Activated naive CD4-positive, alpha-beta T cell treated with anti-CD3 and anti-CD28 coated beads for 36 hours (primary cell): ENCODE measurements at regions of chr14 and their contacts with region 1.

Region 1: GRCh38 chr14:77053046-77053841 is 24.7 kb upstream of the IRF2BPL start:
- DNase-seq: peak; percentile 86
- H3K4me3 Mint-ChIP-seq: no peak overlapping the region
- H3K27ac Mint-ChIP-seq: no peak overlapping the region
- H3K4me1 Mint-ChIP-seq: peaks cover 21% of the 10 kb centered on the region
- H3K27me3 Mint-ChIP-seq: no peaks in the 10 kb centered on the region

Region 2: DNA sequence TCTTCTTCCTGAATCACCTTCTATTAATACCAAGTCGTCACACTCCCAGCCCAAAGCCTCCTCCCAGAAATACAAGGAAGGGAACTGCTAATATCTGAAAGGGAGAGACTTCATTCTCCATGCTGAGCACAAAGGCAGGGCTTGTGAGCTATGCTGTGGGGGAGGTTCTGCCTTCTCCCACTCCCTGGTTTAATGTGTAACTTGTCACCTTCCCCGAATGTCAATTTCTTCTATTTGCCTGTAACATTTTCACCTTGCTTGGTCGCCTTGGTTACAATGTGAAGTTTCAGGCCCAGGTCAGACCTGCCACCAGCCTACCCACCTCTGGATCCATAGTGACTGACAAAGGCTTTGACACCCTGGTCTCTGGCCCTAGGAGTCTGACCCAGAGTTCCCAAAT is 759.3 kb before region 1 on chr14:
- CTCF ChIA-PET with region 1: no interaction called
- intact Hi-C with region 1: no loop called
- DNase-seq: no peak
- H3K4me3 Mint-ChIP-seq: no peak overlapping the region
- H3K27ac Mint-ChIP-seq: no peak overlapping the region
- H3K4me1 Mint-ChIP-seq: no peaks in the 10 kb centered on the region
- H3K27me3 Mint-ChIP-seq: peaks cover 15% of the 10 kb centered on the region

Region 3: DNA sequence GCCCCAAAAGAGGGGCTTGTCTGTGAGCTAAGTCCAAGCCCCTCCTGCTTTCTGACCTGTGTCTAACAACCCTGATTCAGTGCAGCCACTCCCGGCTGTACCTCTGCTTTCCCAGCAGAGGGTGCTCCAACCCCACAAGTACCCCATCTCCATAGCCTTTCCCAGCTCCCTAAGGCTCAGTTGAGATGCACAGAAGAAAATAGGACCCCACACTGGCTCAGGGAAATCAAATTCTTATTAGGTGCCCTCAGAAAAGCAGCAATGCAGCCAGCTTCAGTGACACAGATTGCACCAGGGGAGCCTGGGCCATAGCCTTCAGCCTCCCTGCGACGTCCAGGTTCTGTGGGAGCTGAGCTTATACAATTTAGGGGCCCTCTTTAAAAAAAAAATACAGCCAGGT is 177.2 kb before region 1 on chr14:
- CTCF ChIA-PET with region 1: interaction called, 692 read pairs
- intact Hi-C with region 1: loop called (anchors 1 kb)
- DNase-seq: peak; percentile 55
- H3K4me3 Mint-ChIP-seq: no peak overlapping the region
- H3K27ac Mint-ChIP-seq: no peak overlapping the region
- H3K4me1 Mint-ChIP-seq: no peaks in the 10 kb centered on the region
- H3K27me3 Mint-ChIP-seq: no peaks in the 10 kb centered on the region

Region 4: GRCh38 chr14:76929927-76930326 is 123.3 kb before region 1 on chr14:
- CTCF ChIA-PET with region 1: interaction called, 16 read pairs
- intact Hi-C with region 1: no loop called
- DNase-seq: peak; percentile 85
- H3K4me3 Mint-ChIP-seq: peak overlapping the region; percentile 58
- H3K27ac Mint-ChIP-seq: peak overlapping the region; percentile 72
- H3K4me1 Mint-ChIP-seq: peaks cover 70% of the 10 kb centered on the region
- H3K27me3 Mint-ChIP-seq: no peaks in the 10 kb centered on the region

Region 5: DNA sequence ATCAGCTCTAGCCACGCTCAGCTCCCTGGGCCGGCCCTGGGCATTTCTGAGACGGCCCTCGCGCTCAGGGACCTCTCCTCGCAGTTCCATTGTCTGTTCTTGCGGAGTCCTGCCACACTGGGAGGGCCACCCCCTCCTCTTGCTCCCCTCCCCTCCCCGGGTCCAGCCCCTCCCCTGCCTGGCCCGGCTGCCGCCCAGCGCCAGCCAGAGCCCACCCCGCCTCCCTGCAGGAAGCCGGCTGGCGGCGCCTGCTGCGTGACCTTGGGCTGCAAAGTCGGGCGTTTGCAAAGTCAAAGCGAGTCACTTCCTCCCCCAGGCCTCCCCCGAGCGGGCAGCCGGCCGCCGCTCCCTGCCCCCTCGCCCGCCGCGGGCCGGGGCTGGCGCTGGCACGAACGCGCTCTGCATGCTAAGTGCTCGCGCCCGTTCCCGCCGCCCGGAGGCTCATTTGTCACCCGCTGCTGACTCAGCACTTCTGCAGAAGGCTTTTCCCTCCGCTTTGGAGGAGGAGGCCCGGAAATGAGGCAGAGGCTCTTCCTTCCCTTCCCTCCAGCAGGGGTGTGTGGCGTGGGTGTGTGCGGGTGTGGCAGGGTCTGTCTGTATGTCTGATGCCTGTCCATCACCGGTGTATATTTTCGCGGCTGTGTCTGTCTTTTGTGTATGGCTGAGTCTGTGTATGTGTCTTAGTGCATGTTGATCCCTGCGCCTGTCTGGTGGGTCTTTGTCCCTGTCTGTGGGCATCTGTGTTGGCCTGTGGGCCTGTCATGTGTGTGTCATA is 96.7 kb before region 1 on chr14:
- CTCF ChIA-PET with region 1: interaction called, 28 read pairs
- intact Hi-C with region 1: no loop called
- DNase-seq: peak; percentile 98
- H3K4me3 Mint-ChIP-seq: peak overlapping the region; percentile 80
- H3K27ac Mint-ChIP-seq: peak overlapping the region; percentile 97
- H3K4me1 Mint-ChIP-seq: peaks cover 72% of the 10 kb centered on the region
- H3K27me3 Mint-ChIP-seq: no peaks in the 10 kb centered on the region

Region 6: DNA sequence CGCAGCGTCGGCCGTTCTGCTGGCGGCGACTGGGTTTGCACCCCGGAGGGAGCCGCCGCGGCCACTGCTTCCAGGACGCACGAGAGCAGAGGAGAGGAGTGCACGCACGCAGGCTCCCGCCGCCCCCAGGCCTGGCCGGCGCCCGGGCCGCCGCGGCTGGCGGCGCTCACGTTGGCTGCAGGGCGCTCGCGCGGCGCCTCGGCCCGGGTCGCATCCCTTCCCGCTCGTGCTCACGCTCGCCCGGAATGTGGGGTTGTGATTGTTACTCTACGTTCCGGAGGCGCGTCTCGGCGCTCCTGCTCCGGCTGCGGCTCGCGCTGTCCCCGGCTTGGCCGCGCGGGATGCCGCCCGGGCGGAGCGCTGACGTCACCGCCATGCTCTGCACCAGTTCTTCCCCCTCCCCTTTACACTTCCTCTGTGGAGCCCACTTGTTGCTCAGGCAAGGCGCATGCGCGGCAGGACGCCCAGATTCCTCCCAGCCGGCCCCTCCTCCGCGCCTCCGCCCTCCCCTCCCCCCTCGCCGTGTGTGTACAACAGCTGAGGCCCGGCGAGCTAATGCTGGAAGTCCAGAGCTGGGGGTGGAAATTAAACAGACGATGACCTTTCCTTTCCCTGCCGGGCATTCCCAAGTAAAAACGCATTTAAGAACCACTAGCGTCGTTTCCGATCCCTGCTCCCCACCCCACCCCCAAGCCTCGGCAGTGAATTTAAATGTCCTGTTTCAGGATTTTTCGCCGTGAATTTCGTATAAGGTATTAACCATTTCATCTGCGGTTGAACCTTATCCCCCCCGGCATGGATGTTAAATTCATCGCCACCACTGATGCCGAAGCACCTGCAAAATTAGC is 24.6 kb before region 1 on chr14 and contains the start of gene IRF2BPL:
- CTCF ChIA-PET with region 1: interaction called, 20 read pairs
- intact Hi-C with region 1: loop called (anchors 1 kb)
- DNase-seq: peak; percentile 96
- H3K4me3 Mint-ChIP-seq: peak within 1 kb of the TSS; percentile 82
- H3K27ac Mint-ChIP-seq: peak within 1 kb of the TSS; percentile 94
- H3K4me1 Mint-ChIP-seq: peaks cover 57% of the 10 kb centered on the region
- H3K27me3 Mint-ChIP-seq: no peaks in the 10 kb centered on the region
- total RNA-seq, gene IRF2BPL: 34.8 to 35.2 TPM

Region 7: DNA sequence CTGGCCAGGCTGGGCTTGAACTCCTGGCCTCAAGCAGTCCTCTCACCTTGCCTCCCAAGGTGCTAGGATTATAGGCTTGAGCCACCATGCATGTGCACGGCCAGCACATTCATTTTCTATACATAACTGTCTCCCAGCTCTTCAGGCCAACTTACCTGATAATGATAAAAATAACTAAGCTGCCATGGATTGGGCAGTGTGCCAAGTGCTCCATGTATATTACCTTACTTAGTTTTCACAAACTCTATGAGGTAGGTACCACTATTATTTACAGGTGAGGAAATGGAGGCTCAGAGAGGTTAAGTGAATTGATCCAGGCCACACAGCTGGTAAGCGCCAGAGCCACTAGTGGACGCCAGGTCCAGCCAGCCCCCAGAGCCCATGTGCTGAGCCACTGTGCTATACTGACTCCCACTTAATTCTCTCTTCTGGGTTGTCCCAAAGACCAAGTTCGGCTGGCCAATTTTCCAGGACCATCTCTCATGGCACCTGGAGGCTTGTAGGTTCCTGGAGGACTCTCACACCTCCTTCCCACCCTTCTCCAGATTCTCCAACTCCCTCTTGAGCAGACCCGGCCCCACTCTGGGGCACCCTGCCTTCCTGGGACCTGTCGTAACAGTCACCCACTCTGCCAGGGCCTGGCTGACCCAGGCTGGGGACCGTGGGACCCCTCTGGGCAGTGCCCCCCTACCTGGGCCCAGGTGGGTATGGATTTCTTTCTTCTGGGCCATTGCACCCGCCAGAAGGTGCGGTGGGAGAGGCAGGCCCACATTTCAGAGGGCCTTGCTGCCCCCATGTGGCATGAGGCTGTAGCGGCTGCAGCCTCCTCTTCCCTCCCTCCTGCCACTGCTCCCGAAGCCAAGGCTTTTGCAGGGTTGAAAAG is 14.6 kb after region 1 on chr14:
- CTCF ChIA-PET with region 1: interaction called, 100 read pairs
- intact Hi-C with region 1: loop called (anchors 1 kb)
- DNase-seq: peak; percentile 71
- H3K4me3 Mint-ChIP-seq: no peak overlapping the region
- H3K27ac Mint-ChIP-seq: no peak overlapping the region
- H3K4me1 Mint-ChIP-seq: no peaks in the 10 kb centered on the region
- H3K27me3 Mint-ChIP-seq: peaks cover 2% of the 10 kb centered on the region